Activated T-helper 1 cell treated with anti-CD3 and anti-CD28 coated beads, Interleukin-12 subunit alpha, Interleukin-12 subunit beta, Interleukin-2, Interleukin-4 antibody, amounts not matched to agents 30 ng/mL and 10 ng/mL and 1 ng/mL, durations not matched to agents 14 hours and 24 hours and 36 hours (primary cell): ENCODE measurements at regions of chr7 and their contacts with region 1.

Region 1: GRCh38 chr7:1569833-1570633 is at the start of gene PSMG3:
- DNase-seq: peak; percentile 86
- H3K4me3 Mint-ChIP-seq: peak within 1 kb of the TSS; percentile 89
- H3K27ac Mint-ChIP-seq: peak within 1 kb of the TSS; percentile 81
- H3K4me1 Mint-ChIP-seq: peaks cover 31% of the 10 kb centered on the region
- H3K27me3 Mint-ChIP-seq: no peaks in the 10 kb centered on the region
- total RNA-seq, gene PSMG3: 55.7 and 56.0 TPM in 2 replicates

Region 2: GRCh38 chr7:1368682-1369571 is 201.1 kb before region 1 on chr7:
- intact Hi-C with region 1: no loop called
- DNase-seq: no peak
- H3K4me3 Mint-ChIP-seq: no peak overlapping the region
- H3K27ac Mint-ChIP-seq: no peak overlapping the region
- H3K4me1 Mint-ChIP-seq: peaks cover 6% of the 10 kb centered on the region
- H3K27me3 Mint-ChIP-seq: peaks cover 23% of the 10 kb centered on the region

Region 3: DNA sequence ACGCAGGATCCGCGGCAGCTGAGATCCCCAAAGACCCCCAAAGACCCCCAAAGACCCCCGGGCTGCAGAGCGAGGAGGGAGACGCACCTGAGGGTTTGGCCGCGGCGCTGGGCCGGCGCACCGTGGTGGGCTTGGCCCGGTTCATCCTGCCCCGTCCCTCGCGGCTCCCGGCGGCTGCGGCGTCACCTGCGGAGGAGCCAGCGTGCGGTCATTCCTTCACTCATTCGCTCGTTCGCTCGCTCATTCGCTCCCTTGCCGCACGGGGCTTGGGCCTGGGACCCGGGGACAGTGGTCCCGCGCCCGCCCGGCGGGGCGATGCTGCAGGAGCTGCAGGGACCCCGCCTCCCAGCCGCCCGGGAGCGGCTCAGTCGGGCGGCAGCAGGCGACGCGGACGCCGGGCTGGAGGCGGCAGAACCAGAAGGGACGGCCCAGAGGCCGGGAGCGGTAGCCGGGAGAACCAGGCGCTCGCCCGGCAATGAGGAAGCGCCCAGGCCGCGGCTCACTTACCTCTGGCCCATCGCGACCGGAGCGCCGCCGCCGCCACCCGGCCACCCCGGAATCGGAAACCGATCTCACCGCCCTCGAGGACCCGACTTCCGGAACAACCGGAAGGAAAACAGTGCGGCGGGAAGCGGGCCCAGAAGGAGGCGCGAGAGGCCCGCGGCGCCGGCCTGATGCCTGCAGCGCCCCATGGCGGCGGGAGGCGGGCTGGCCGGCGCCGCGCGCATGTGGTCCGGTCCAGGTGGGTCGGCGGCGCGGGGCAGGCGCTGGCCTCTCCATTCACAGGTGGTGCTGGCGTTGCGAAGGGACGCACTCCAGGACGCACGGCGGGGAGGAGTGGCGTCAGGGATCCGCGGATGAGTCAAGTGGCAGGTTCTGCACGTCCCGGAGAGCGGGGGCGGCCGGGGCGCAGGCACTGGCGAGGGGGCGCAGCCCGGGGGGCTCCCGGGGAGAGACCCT is 65.9 kb before region 1 on chr7 and contains the start of gene INTS1:
- intact Hi-C with region 1: loop called (anchors 1 kb)
- DNase-seq: peak; percentile 90
- H3K4me3 Mint-ChIP-seq: peak within 1 kb of the TSS; percentile 89
- H3K27ac Mint-ChIP-seq: peak within 1 kb of the TSS; percentile 85
- H3K4me1 Mint-ChIP-seq: peaks cover 31% of the 10 kb centered on the region
- H3K27me3 Mint-ChIP-seq: no peaks in the 10 kb centered on the region
- total RNA-seq, gene INTS1: 94.3 and 97.9 TPM in 2 replicates

Region 4: GRCh38 chr7:1659696-1660095 is 89.7 kb after region 1 on chr7:
- intact Hi-C with region 1: no loop called
- DNase-seq: no peak
- H3K4me3 Mint-ChIP-seq: no peak overlapping the region
- H3K27ac Mint-ChIP-seq: no peak overlapping the region
- H3K4me1 Mint-ChIP-seq: no peaks in the 10 kb centered on the region
- H3K27me3 Mint-ChIP-seq: peaks cover 30% of the 10 kb centered on the region

Region 5: GRCh38 chr7:2232766-2233520 is 662.9 kb after region 1 on chr7 and contains the start of gene MAD1L1:
- intact Hi-C with region 1: loop called (anchors 5 kb)
- DNase-seq: peak; percentile 88
- H3K4me3 Mint-ChIP-seq: peak within 1 kb of the TSS; percentile 96
- H3K27ac Mint-ChIP-seq: peak within 1 kb of the TSS; percentile 83
- H3K4me1 Mint-ChIP-seq: peaks cover 26% of the 10 kb centered on the region
- H3K27me3 Mint-ChIP-seq: no peaks in the 10 kb centered on the region
- total RNA-seq, gene MAD1L1: 56.2 and 56.4 TPM in 2 replicates

Region 6: GRCh38 chr7:2314209-2314955 is 744.3 kb after region 1 on chr7 and contains the start of gene SNX8:
- intact Hi-C with region 1: loop called (anchors 1 kb)
- DNase-seq: peak; percentile 93
- H3K4me3 Mint-ChIP-seq: peak within 1 kb of the TSS; percentile 91
- H3K27ac Mint-ChIP-seq: peak within 1 kb of the TSS; percentile 87
- H3K4me1 Mint-ChIP-seq: peaks cover 8% of the 10 kb centered on the region
- H3K27me3 Mint-ChIP-seq: no peaks in the 10 kb centered on the region
- total RNA-seq, gene SNX8: 40.8 and 41.8 TPM in 2 replicates